B cell (primary cell): ENCODE measurements at regions of chr14 and their contacts with region 1.

Region 1: GRCh38 chr14:24108336-24108874 is 6.2 kb upstream of the DCAF11 start:
- DNase-seq: no peak
- ATAC-seq: peak; percentile 14
- H3K4me3 ChIP-seq: no peak overlapping the region
- H3K4me3 Mint-ChIP-seq: no peak overlapping the region
- H3K27ac ChIP-seq: peak overlapping the region; percentile 44 to 68
- H3K27ac Mint-ChIP-seq: peak overlapping the region; percentile 95
- H3K4me1 ChIP-seq: peaks cover 10 to 13% of the 10 kb centered on the region in 2 donors
- H3K4me1 Mint-ChIP-seq: peaks cover 11% of the 10 kb centered on the region
- H3K27me3 ChIP-seq: no peaks in the 10 kb centered on the region
- H3K27me3 Mint-ChIP-seq: no peaks in the 10 kb centered on the region
- CTCF ChIP-seq: no peak

Region 2: DNA sequence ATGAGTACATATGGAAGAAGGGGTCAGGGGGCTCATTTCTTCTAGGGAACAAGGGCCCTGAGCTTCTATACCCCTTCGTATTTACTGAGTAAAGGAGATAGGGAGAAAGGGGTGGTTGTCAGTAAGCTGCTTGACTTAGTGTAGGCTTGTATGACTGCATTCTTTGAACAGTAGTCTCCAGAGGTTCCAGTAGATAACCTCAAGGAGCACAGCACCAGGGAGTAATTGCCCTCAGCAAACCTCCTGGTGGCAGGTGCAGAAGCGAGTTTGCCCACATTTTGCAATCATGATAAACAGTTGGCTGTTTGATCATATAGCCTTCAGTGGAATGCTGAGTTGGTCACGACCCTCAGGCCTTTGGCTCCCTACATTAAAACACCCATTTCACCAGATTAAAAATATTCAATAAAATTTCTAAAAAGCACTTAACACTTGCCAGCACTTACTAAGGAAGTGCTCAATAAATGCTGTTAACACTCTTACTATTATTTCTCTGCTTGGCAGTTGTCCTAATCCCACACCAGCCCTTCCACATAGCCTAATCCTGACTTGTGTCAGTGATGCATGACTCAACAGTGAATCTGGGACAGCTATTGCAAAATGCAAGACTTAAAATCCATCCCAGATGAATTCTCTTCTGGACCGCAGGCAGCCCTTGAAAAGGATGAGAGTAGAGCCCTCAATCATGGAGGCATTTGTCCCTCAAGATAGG is 123.4 kb before region 1 on chr14:
- CTCF ChIA-PET with region 1: interaction called, 3 read pairs
- POLR2A ChIA-PET with region 1: interaction called, 3 read pairs
- intact Hi-C with region 1: loop called (anchors 10 kb)
- DNase-seq: no peak
- ATAC-seq: no peak
- H3K4me3 ChIP-seq: no peak overlapping the region
- H3K4me3 Mint-ChIP-seq: no peak overlapping the region
- H3K27ac ChIP-seq: no peak overlapping the region
- H3K27ac Mint-ChIP-seq: no peak overlapping the region
- H3K4me1 ChIP-seq: peaks cover 3 to 14% of the 10 kb centered on the region in 2 donors
- H3K4me1 Mint-ChIP-seq: peaks cover 23% of the 10 kb centered on the region
- H3K27me3 ChIP-seq: no peaks in the 10 kb centered on the region
- H3K27me3 Mint-ChIP-seq: no peaks in the 10 kb centered on the region
- CTCF ChIP-seq: no peak

Region 3: GRCh38 chr14:24036169-24036962 is 72.0 kb before region 1 on chr14:
- CTCF ChIA-PET with region 1: interaction called, 11 read pairs
- POLR2A ChIA-PET with region 1: no interaction called
- intact Hi-C with region 1: no loop called
- DNase-seq: peak; percentile 75
- ATAC-seq: peak; percentile 92
- H3K4me3 ChIP-seq: peak overlapping the region; percentile 34 to 77 (median 59)
- H3K4me3 Mint-ChIP-seq: peak overlapping the region; percentile 98
- H3K27ac ChIP-seq: peak overlapping the region; percentile 33 to 38
- H3K27ac Mint-ChIP-seq: peak overlapping the region; percentile 87
- H3K4me1 ChIP-seq: peaks cover 0 to 9% of the 10 kb centered on the region in 2 donors
- H3K4me1 Mint-ChIP-seq: peaks cover 10% of the 10 kb centered on the region
- H3K27me3 ChIP-seq: no peaks in the 10 kb centered on the region
- H3K27me3 Mint-ChIP-seq: no peaks in the 10 kb centered on the region
- CTCF ChIP-seq: peak; percentile 68

Region 4: DNA sequence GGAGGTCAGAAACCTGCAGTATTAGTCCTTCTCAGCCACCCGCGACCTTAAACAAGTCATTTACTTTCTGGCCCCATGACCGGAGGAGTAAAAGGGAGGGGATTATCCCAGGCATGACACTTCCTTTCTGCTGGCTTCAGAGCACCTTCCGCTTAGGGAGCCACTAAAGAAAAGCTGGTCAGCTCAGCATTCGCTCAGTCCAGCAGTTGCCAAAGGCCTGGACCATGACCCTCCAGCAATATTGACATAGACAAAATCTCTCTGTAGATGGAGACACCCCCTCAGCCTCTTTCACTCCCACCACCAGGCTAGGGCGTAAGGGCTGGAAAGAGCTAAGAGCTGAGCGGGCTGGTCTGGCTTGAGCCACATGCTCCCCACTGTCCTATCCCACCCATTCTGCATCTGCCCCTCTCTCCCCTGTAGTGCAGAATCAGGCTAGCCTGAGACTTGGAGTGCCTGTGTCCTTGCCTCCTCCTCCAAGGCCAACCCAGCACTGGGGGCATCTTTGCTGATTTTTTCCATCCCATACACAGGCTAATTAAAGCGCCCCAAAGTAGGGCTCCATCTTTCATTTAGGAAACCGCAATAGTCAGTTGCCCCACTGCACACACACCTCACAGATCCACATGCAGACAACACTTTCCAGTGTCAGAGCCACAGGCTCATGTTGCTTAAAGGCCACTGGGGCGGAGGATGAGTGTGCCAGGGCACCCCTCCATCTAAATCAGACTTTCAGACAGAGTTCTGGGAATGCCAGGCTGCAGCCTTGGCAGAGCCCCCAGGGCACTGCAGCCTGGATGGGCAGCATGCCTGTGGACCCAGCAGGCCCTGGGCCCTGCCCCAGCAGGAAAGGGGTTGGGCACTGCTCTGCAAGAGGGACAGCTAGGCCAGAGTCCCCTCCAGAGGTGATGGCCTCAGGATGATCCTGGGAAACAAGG is 41.0 kb before region 1 on chr14:
- CTCF ChIA-PET with region 1: interaction called, 10 read pairs
- POLR2A ChIA-PET with region 1: no interaction called
- intact Hi-C with region 1: no loop called
- DNase-seq: no peak
- ATAC-seq: no peak
- H3K4me3 ChIP-seq: no peak overlapping the region
- H3K4me3 Mint-ChIP-seq: no peak overlapping the region
- H3K27ac ChIP-seq: no peak overlapping the region
- H3K27ac Mint-ChIP-seq: no peak overlapping the region
- H3K4me1 ChIP-seq: no peaks in the 10 kb centered on the region
- H3K4me1 Mint-ChIP-seq: no peaks in the 10 kb centered on the region
- H3K27me3 ChIP-seq: peaks cover 0 to 4% (median 0%) of the 10 kb centered on the region in 4 experiments
- H3K27me3 Mint-ChIP-seq: peaks cover 4% of the 10 kb centered on the region
- CTCF ChIP-seq: no peak

Region 5: GRCh38 chr14:24080888-24081738 is 27.3 kb before region 1 on chr14:
- CTCF ChIA-PET with region 1: interaction called, 75 read pairs
- POLR2A ChIA-PET with region 1: interaction called, 15 read pairs
- intact Hi-C with region 1: no loop called
- DNase-seq: peak; percentile 82
- ATAC-seq: peak; percentile 93
- H3K4me3 ChIP-seq: peak overlapping the region; percentile 48 to 78 (median 64)
- H3K4me3 Mint-ChIP-seq: peak overlapping the region; percentile 86
- H3K27ac ChIP-seq: peak overlapping the region; percentile 75 to 77
- H3K27ac Mint-ChIP-seq: peak overlapping the region; percentile 91
- H3K4me1 ChIP-seq: peaks cover 19 to 24% of the 10 kb centered on the region in 2 donors
- H3K4me1 Mint-ChIP-seq: peaks cover 30% of the 10 kb centered on the region
- H3K27me3 ChIP-seq: no peaks in the 10 kb centered on the region
- H3K27me3 Mint-ChIP-seq: no peaks in the 10 kb centered on the region
- CTCF ChIP-seq: no peak

Region 6: GRCh38 chr14:24135834-24136542 is 27.6 kb after region 1 on chr14 and contains the start of gene PSME1:
- CTCF ChIA-PET with region 1: interaction called, 28 read pairs
- POLR2A ChIA-PET with region 1: interaction called, 49 read pairs
- intact Hi-C with region 1: no loop called
- DNase-seq: peak; percentile 96
- ATAC-seq: peak; percentile 97
- H3K4me3 ChIP-seq: peak within 1 kb of the TSS; percentile 54 to 96 (median 78)
- H3K4me3 Mint-ChIP-seq: peak within 1 kb of the TSS; percentile 92
- H3K27ac ChIP-seq: peak within 1 kb of the TSS; percentile 87 to 97
- H3K27ac Mint-ChIP-seq: peak within 1 kb of the TSS; percentile 94
- H3K4me1 ChIP-seq: peaks cover 33 to 43% of the 10 kb centered on the region in 2 donors
- H3K4me1 Mint-ChIP-seq: peaks cover 57% of the 10 kb centered on the region
- H3K27me3 ChIP-seq: no peaks in the 10 kb centered on the region
- H3K27me3 Mint-ChIP-seq: no peaks in the 10 kb centered on the region
- CTCF ChIP-seq: no peak
- total RNA-seq, gene PSME1: 227 and 237 TPM in 2 replicates

Region 7: GRCh38 chr14:24299255-24300195 is 191.1 kb after region 1 on chr14 and contains the starts of genes DHRS1 and NOP9:
- CTCF ChIA-PET with region 1: interaction called, 11 read pairs
- POLR2A ChIA-PET with region 1: interaction called, 3 read pairs
- intact Hi-C with region 1: no loop called
- DNase-seq: peak; percentile 95
- ATAC-seq: peak; percentile 86
- H3K4me3 ChIP-seq: peak within 1 kb of the TSS; percentile 58 to 93 (median 77)
- H3K4me3 Mint-ChIP-seq: peak within 1 kb of the TSS; percentile 96
- H3K27ac ChIP-seq: peak within 1 kb of the TSS; percentile 79 to 83
- H3K27ac Mint-ChIP-seq: peak within 1 kb of the TSS; percentile 98
- H3K4me1 ChIP-seq: peaks cover 30 to 41% of the 10 kb centered on the region in 2 donors
- H3K4me1 Mint-ChIP-seq: peaks cover 48% of the 10 kb centered on the region
- H3K27me3 ChIP-seq: no peaks in the 10 kb centered on the region
- H3K27me3 Mint-ChIP-seq: no peaks in the 10 kb centered on the region
- CTCF ChIP-seq: no peak
- total RNA-seq, gene DHRS1: 42.7 and 43.7 TPM in 2 replicates
- total RNA-seq, gene NOP9: 22.6 and 24.5 TPM in 2 replicates